CD8-positive, alpha-beta T cell (primary cell): ENCODE measurements at regions of chr19 and their contacts with region 1.

Region 1: DNA sequence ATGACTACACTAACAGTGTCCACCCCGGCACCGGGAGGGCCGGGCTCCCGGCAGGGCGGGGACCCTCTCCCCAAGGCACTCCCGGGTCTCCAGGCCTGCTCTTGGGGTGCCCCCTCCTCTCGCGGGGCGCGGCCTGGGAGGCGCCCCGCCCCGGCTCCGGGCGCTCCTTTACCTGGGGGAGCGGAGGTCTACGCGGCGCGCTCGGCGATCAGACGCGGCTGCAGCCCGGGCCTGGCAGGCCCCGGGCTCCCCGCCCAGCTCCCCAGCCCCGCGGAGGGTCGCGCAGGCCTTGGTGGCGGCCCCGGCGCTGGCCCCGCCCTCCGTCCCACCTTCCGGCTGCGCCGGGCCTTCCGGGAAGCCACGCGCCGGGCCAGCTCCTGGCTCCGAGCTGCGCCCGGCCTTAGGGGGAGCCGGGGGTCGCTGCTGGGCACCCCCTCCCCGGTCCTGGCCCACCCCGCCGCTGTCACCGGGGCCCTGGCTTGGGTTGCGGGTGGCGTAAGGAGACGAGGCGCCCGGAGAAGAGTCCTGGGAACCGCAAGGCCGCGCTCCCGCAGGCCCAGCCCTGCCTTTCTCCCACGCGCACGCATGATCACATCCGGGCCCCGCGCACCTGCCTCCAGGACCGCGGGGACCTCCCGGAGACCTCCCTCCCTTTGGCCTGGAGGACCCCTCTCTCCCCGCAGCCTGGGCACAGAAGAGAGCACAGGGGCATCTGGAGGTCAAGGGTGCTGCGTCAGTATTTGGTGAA is at the start of gene C19orf12:
- DNase-seq: peak; percentile 21 to 78 (median 52)
- ATAC-seq: peak; percentile 54
- H3K4me3 ChIP-seq: peak within 1 kb of the TSS; percentile 77 to 88
- H3K4me3 Mint-ChIP-seq: peak within 1 kb of the TSS; percentile 86
- H3K27ac ChIP-seq: peak within 1 kb of the TSS; percentile 89 to 99
- H3K27ac Mint-ChIP-seq: peak within 1 kb of the TSS; percentile 97
- H3K4me1 ChIP-seq: peaks cover 54% of the 10 kb centered on the region
- H3K4me1 Mint-ChIP-seq: peaks cover 53% of the 10 kb centered on the region
- H3K27me3 ChIP-seq: no peaks in the 10 kb centered on the region
- H3K27me3 Mint-ChIP-seq: no peaks in the 10 kb centered on the region
- CTCF ChIP-seq: no peak
- total RNA-seq, gene C19orf12: 7.0 to 8.9 TPM

Region 2: DNA sequence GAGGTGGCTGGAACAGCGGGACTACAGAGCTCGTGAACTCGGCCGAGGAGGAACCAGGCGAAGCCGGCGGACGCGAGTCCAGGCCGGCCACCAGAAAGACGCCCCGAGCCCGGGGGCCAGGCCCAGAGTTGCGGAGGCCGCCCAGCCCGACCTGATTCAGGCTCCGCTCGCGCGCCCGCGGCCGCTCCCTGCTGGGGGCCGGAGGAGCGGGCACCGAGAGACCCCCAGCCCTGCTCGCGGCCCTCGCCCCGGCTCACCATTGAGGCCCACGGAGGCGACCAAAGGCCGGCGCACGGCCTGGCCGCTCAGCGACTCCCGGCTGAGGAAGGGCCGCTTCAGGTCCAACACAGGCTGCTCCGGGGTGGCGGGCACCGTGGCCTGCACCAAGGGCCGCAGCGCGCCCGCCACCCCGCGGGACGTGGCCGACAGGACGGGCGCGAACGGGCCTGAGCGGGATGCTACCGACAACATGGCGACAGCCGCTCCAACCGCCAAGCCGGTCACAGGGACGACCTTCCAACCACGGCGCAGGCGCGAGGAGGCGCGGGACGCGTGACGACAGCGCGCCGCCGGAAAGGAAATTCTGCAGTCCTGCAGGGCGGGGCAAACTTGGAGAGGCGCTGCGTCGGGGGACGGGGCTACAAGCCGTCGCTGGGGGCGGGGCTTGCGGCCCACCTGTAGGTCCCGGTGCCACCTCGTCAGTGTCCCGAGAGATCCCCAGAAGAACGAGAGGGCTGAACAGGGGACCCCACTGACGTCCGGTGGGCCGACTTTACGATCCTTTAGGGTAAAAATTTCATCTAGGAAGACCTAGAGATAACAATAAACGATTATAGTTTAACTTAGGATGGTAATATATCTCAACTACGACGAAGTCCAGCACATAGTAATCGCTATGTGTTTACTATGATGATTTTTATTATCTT is 502.2 kb before region 1 on chr19 and contains the start of gene UQCRFS1:
- CTCF ChIA-PET with region 1: no interaction called
- POLR2A ChIA-PET with region 1: no interaction called
- intact Hi-C with region 1: loop called (anchors 5 to 10 kb)
- DNase-seq: peak; percentile 92 to 97 (median 95)
- ATAC-seq: peak; percentile 97
- H3K4me3 ChIP-seq: peak within 1 kb of the TSS; percentile 60 to 77
- H3K4me3 Mint-ChIP-seq: peak within 1 kb of the TSS; percentile 95
- H3K27ac ChIP-seq: peak within 1 kb of the TSS; percentile 80 to 89
- H3K27ac Mint-ChIP-seq: peak within 1 kb of the TSS; percentile 96
- H3K4me1 ChIP-seq: peaks cover 17% of the 10 kb centered on the region
- H3K4me1 Mint-ChIP-seq: peaks cover 46% of the 10 kb centered on the region
- H3K27me3 ChIP-seq: no peaks in the 10 kb centered on the region
- H3K27me3 Mint-ChIP-seq: peaks cover 6% of the 10 kb centered on the region
- CTCF ChIP-seq: no peak
- total RNA-seq, gene UQCRFS1: 31.5 to 31.8 TPM

Region 3: DNA sequence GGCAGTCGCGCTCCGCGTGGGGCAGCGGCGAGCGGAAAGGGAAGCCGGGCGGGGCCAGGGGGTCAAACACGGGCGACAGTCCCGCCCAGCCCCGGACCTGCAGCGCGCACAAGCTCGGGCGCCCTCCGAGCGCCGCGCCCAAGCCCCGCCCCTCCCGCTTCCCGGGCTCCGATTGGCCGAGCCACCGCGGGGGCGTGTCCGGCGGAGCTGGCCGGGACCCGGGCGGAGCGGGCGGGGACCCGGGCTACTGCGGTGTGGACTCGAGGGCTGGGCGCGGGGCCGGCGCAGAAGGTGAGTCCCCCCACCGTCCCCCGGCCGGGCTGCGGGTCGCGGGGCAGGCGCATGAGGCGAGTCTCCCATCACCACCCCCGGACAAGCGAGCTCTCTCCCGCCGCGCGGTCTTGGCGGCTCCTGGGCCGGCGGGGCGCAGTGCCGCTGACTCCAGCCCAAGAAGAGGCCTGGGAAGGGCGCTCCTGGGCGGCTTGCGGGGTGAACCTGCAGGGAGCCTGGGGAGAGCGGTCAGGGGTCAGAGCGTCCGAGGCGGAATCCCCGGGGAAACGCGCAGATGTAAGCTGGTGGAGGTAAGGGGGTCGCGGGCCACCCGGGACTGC is 49.8 kb before region 1 on chr19 and contains the start of gene PLEKHF1:
- CTCF ChIA-PET with region 1: interaction called, 79 read pairs
- POLR2A ChIA-PET with region 1: interaction called, 47 read pairs
- intact Hi-C with region 1: loop called in 1 of 2 experiments (anchors 1 kb)
- DNase-seq: peak; percentile 56 to 89 (median 81)
- ATAC-seq: peak; percentile 69
- H3K4me3 ChIP-seq: peak within 1 kb of the TSS; percentile 91 to 96
- H3K4me3 Mint-ChIP-seq: peak within 1 kb of the TSS; percentile 89
- H3K27ac ChIP-seq: peak within 1 kb of the TSS; percentile 69 to 84
- H3K27ac Mint-ChIP-seq: peak within 1 kb of the TSS; percentile 94
- H3K4me1 ChIP-seq: peaks cover 57% of the 10 kb centered on the region
- H3K4me1 Mint-ChIP-seq: peaks cover 60% of the 10 kb centered on the region
- H3K27me3 ChIP-seq: no peaks in the 10 kb centered on the region
- H3K27me3 Mint-ChIP-seq: no peaks in the 10 kb centered on the region
- CTCF ChIP-seq: no peak
- total RNA-seq, gene PLEKHF1: 33.7 to 34.1 TPM

Region 4: GRCh38 chr19:29680447-29680846 is 34.7 kb before region 1 on chr19:
- CTCF ChIA-PET with region 1: interaction called, 22 read pairs
- POLR2A ChIA-PET with region 1: interaction called, 6 read pairs
- intact Hi-C with region 1: no loop called
- DNase-seq: peak; percentile 67 to 94 (median 85)
- ATAC-seq: peak; percentile 83
- H3K4me3 ChIP-seq: peak overlapping the region; percentile 13 to 44
- H3K4me3 Mint-ChIP-seq: peak overlapping the region; percentile 71
- H3K27ac ChIP-seq: peak overlapping the region; percentile 26 to 71
- H3K27ac Mint-ChIP-seq: peak overlapping the region; percentile 86
- H3K4me1 ChIP-seq: peaks cover 74% of the 10 kb centered on the region
- H3K4me1 Mint-ChIP-seq: peaks cover 76% of the 10 kb centered on the region
- H3K27me3 ChIP-seq: no peaks in the 10 kb centered on the region
- H3K27me3 Mint-ChIP-seq: no peaks in the 10 kb centered on the region
- CTCF ChIP-seq: no peak

Region 5: DNA sequence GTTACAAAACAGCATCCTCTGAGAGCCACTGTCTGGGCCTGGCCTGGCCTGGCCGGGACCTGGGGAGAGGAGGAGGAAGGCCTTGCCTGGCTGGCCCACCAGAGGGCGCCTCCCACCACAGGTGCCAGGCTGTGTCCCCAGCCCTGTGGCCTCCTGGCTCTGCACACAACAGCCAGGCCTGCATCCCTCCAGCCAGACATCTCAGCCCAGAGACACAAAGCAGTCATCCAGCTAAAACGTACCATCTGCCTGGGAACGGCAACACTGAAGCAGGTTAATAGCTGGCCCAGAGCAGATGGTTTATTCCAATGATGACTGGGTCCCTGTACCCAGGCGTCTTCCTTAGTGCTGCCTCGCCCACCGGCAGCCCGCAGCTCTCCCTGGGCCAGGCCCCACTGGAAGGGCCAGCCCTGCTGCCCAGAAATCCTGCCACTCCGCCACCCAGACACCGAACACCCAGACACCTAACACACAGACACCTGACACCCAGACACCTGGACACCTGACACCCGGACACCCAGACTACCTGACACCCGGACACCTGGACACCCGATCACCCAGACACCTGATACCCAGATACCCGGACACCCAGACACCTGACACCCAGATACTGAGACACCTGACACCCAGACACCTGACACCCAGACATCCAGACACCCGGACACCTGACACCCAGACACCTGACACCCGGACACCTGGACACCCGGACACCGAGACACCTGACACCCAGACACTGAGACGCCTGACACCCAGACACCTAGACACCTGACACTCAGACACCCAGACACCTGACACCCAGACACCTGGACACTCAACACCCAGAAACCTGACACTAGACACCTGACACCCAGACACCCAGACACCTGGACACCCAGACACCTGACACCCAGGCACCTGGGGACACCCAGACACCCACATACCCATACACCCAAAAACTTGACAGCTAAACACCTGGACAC is 20.2 kb before region 1 on chr19:
- CTCF ChIA-PET with region 1: interaction called, 371 read pairs
- POLR2A ChIA-PET with region 1: interaction called, 31 read pairs
- intact Hi-C with region 1: loop called (anchors 1 kb)
- DNase-seq: peak; percentile 71 to 91 (median 83)
- ATAC-seq: peak; percentile 93
- H3K4me3 ChIP-seq: no peak overlapping the region
- H3K4me3 Mint-ChIP-seq: no peak overlapping the region
- H3K27ac ChIP-seq: no peak overlapping the region
- H3K27ac Mint-ChIP-seq: peak overlapping the region; percentile 39
- H3K4me1 ChIP-seq: peaks cover 26% of the 10 kb centered on the region
- H3K4me1 Mint-ChIP-seq: peaks cover 17% of the 10 kb centered on the region
- H3K27me3 ChIP-seq: no peaks in the 10 kb centered on the region
- H3K27me3 Mint-ChIP-seq: no peaks in the 10 kb centered on the region
- CTCF ChIP-seq: peak; percentile 97

Region 6: GRCh38 chr19:29753190-29753933 is 38.2 kb after region 1 on chr19:
- CTCF ChIA-PET with region 1: no interaction called
- POLR2A ChIA-PET with region 1: no interaction called
- intact Hi-C with region 1: no loop called
- DNase-seq: no peak
- ATAC-seq: no peak
- H3K4me3 ChIP-seq: no peak overlapping the region
- H3K4me3 Mint-ChIP-seq: no peak overlapping the region
- H3K27ac ChIP-seq: no peak overlapping the region
- H3K27ac Mint-ChIP-seq: no peak overlapping the region
- H3K4me1 ChIP-seq: no peaks in the 10 kb centered on the region
- H3K4me1 Mint-ChIP-seq: no peaks in the 10 kb centered on the region
- H3K27me3 ChIP-seq: no peaks in the 10 kb centered on the region
- H3K27me3 Mint-ChIP-seq: peaks cover 2% of the 10 kb centered on the region
- CTCF ChIP-seq: no peak

Region 7: GRCh38 chr19:29844891-29845572 is 129.9 kb after region 1 on chr19:
- CTCF ChIA-PET with region 1: interaction called, 5 read pairs
- POLR2A ChIA-PET with region 1: interaction called, 3 read pairs
- intact Hi-C with region 1: loop called in 1 of 2 experiments (anchors 1 kb)
- DNase-seq: peak; percentile 92 to 99 (median 97)
- ATAC-seq: peak; percentile 79
- H3K4me3 ChIP-seq: peak overlapping the region; percentile 93 to 95
- H3K4me3 Mint-ChIP-seq: peak overlapping the region; percentile 96
- H3K27ac ChIP-seq: peak overlapping the region; percentile 74 to 80
- H3K27ac Mint-ChIP-seq: peak overlapping the region; percentile 97
- H3K4me1 ChIP-seq: peaks cover 12% of the 10 kb centered on the region
- H3K4me1 Mint-ChIP-seq: peaks cover 14% of the 10 kb centered on the region
- H3K27me3 ChIP-seq: peaks cover 0 to 7% of the 10 kb centered on the region in 2 experiments
- H3K27me3 Mint-ChIP-seq: no peaks in the 10 kb centered on the region
- CTCF ChIP-seq: no peak

Region 8: DNA sequence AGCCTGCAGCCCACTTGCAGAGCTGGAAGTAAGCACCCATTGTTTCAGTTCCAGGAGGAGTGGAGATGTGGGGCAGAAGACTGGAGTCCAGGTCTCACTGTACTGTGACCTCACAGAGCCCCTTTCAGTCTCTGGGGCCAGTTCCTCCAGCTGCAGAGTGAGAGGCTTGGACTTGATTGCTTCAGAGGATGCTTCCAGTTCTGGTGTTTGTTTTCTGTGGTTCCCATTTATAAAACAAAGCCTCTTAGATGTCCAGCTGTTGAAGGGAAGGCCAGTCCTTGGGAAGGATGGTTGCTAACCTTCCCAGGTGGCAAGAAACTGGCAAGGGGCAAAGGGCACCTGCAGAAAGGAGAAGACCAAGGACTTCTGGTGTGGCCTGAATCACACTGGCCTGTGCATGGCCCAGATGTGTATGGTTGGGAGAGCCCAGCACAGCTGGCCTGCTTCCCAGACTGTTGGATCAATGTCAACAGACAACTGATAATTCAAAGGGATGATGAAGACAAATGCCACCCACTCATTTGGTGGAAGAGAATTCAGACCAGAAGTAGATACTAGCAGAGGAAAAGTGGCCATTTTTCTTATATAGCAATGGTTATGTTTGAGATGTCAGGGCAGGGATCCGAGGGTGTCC is 875.6 kb after region 1 on chr19:
- CTCF ChIA-PET with region 1: no interaction called
- POLR2A ChIA-PET with region 1: no interaction called
- intact Hi-C with region 1: no loop called
- DNase-seq: no peak
- ATAC-seq: no peak
- H3K4me3 ChIP-seq: no peak overlapping the region
- H3K4me3 Mint-ChIP-seq: no peak overlapping the region
- H3K27ac ChIP-seq: no peak overlapping the region
- H3K27ac Mint-ChIP-seq: no peak overlapping the region
- H3K4me1 ChIP-seq: no peaks in the 10 kb centered on the region
- H3K4me1 Mint-ChIP-seq: no peaks in the 10 kb centered on the region
- H3K27me3 ChIP-seq: no peaks in the 10 kb centered on the region
- H3K27me3 Mint-ChIP-seq: peaks cover 4% of the 10 kb centered on the region
- CTCF ChIP-seq: no peak